Left lung (tissue), 14 donors: ENCODE measurements at regions of chrX and their contacts with region 1.

Region 1: DNA sequence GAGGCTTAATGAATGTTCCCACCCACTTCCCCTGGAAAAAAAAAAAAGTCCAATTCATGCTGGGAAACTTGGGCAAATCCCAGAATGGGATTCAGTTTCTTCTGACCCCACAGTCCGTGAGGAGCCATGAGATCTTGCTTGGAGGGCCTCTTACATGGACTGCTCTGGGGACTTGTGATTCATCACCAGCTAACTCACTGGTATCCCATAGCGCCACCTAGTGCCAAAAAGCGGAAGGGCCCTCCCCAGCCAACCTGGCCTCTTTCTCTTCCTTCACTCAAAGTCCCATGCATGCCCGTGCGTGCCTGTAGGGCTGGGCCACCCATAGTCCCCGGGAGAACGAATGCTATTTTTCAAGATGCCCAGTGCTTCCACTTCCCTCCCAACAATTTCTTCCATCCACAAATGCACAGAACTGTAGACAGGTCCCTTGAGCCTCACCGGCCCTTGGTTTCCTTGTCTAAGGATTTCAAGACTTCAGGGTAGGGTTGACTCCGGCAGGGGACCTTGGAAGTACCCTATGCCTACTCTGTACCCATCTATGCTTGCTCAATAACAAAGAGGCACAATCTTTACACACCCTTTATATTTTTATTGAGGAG is 5.1 kb downstream of the RTL5 start:
- DNase-seq: peak; percentile 70 to 88 (median 84)
- ATAC-seq: peak; percentile 89
- H3K4me3 ChIP-seq: no peak overlapping the region
- H3K27ac ChIP-seq: peak overlapping the region in 1 of 2 donors; percentile 53
- H3K4me1 ChIP-seq: peaks cover 0 to 66% of the 10 kb centered on the region in 2 donors
- H3K27me3 ChIP-seq: peaks cover 6% of the 10 kb centered on the region in 2 donors
- CTCF ChIP-seq: peak; percentile 86 to 90

Region 2: DNA sequence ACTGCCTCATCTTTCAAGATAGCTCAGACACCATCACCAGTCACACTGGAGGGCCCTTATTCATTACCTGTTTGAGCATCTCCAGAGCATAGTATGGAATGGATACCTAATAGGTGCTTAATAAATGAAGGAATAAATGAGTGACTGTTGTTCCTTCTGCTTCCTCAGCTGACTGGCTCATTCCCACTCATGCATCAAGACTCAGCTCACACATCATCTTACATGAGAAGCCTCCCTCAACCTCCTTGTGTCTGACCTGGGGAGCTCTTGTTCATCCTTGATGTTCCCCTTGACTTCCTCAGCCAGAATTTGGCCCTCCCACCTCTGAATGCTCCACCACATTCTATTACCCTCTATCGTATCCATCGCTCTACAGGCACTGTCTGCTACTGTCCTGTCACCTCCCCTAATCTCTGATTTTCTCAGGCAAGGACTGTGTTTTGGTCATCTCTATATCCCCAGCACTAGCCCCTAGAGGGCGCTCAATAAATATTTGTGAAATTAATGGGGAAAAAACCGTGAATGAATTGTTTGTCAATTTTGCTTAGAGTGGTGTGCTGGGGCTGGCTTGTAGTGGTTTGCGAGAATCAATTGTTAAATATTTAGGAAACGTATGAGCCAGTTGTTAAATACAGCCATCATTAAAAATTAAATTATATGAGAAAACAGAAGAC is 127.7 kb before region 1 on chrX:
- intact Hi-C with region 1: loop called in 1 of 2 experiments (anchors 5 kb)
- DNase-seq: no peak
- ATAC-seq: peak; percentile 64
- H3K4me3 ChIP-seq: no peak overlapping the region
- H3K27ac ChIP-seq: no peak overlapping the region
- H3K4me1 ChIP-seq: peaks cover 0 to 2% of the 10 kb centered on the region in 2 donors
- H3K27me3 ChIP-seq: no peaks in the 10 kb centered on the region
- CTCF ChIP-seq: peak; percentile 47

Region 3: GRCh38 chrX:72018277-72019112 is 108.1 kb before region 1 on chrX:
- intact Hi-C with region 1: loop called in 1 of 2 experiments (anchors 5 kb)
- DNase-seq: peak; percentile 72 to 96 (median 89)
- ATAC-seq: peak; percentile 98
- H3K4me3 ChIP-seq: no peak overlapping the region
- H3K27ac ChIP-seq: peak overlapping the region in 1 of 2 donors; percentile 48
- H3K4me1 ChIP-seq: peaks cover 0 to 4% of the 10 kb centered on the region in 2 donors
- H3K27me3 ChIP-seq: peaks cover 0 to 30% of the 10 kb centered on the region in 2 donors
- CTCF ChIP-seq: peak; percentile 62 to 91